ENCODE measurements at regions of chr12 and their contacts with region 1.

Region 1: DNA sequence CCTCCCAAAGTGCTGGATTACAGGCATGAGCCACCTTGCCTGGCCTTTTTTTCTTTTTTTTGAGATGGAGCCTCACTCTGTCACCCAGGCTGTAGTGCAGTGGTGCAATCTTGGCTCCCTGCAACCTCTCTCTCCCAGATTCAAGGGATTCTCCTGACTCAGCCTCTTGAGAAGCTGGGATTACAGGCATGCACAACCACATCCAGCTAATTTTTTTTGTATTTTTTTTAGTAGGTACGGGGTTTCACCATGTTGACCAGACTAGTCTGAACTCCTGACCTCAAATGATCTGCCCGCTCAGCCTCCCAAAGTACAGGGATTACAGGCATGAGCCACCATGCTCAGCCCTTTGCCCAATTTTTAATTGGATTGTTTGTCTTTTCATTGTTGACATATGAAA is 58.0 kb downstream of the SINHCAF start:
- DNase-seq: no peak
- H3K4me3 Mint-ChIP-seq: no peak overlapping the region
- H3K27ac Mint-ChIP-seq: no peak overlapping the region
- H3K4me1 Mint-ChIP-seq: peaks cover 5% of the 10 kb centered on the region
- H3K27me3 Mint-ChIP-seq: no peaks in the 10 kb centered on the region

Region 2: GRCh38 chr12:31031951-31032335 is 236.0 kb before region 1 on chr12:
- CTCF ChIA-PET with region 1: no interaction called
- POLR2A ChIA-PET with region 1: no interaction called
- intact Hi-C with region 1: no loop called
- DNase-seq: no peak
- H3K4me3 Mint-ChIP-seq: no peak overlapping the region
- H3K27ac Mint-ChIP-seq: no peak overlapping the region
- H3K4me1 Mint-ChIP-seq: no peaks in the 10 kb centered on the region
- H3K27me3 Mint-ChIP-seq: peaks cover 10% of the 10 kb centered on the region

Region 3: GRCh38 chr12:31238764-31239387 is 29.1 kb before region 1 on chr12:
- CTCF ChIA-PET with region 1: interaction called, 24 read pairs
- POLR2A ChIA-PET with region 1: no interaction called
- intact Hi-C with region 1: no loop called
- DNase-seq: peak; percentile 84
- H3K4me3 Mint-ChIP-seq: no peak overlapping the region
- H3K27ac Mint-ChIP-seq: no peak overlapping the region
- H3K4me1 Mint-ChIP-seq: peaks cover 10% of the 10 kb centered on the region
- H3K27me3 Mint-ChIP-seq: peaks cover 12% of the 10 kb centered on the region

Region 4: DNA sequence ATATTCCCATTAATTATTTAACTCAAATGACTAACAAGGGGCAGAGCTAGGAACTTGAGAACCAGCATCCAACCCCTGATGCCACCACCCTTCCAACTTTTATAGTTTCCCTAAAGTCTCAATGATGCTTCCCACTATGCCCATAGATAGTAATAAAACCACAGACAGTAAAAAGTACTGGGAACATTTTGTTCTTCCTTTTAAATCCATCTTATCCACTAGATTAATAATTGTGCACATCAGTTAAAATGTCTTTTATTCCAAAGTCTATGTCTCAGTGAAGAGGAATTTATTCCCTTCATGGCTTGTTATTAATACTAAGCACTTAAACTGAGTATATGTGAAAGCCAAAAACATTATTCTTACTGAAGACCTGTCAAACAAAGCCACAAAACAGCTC is 12.2 kb after region 1 on chr12:
- CTCF ChIA-PET with region 1: interaction called, 15 read pairs
- POLR2A ChIA-PET with region 1: no interaction called
- intact Hi-C with region 1: no loop called
- DNase-seq: no peak
- H3K4me3 Mint-ChIP-seq: no peak overlapping the region
- H3K27ac Mint-ChIP-seq: no peak overlapping the region
- H3K4me1 Mint-ChIP-seq: no peaks in the 10 kb centered on the region
- H3K27me3 Mint-ChIP-seq: no peaks in the 10 kb centered on the region

Region 5: DNA sequence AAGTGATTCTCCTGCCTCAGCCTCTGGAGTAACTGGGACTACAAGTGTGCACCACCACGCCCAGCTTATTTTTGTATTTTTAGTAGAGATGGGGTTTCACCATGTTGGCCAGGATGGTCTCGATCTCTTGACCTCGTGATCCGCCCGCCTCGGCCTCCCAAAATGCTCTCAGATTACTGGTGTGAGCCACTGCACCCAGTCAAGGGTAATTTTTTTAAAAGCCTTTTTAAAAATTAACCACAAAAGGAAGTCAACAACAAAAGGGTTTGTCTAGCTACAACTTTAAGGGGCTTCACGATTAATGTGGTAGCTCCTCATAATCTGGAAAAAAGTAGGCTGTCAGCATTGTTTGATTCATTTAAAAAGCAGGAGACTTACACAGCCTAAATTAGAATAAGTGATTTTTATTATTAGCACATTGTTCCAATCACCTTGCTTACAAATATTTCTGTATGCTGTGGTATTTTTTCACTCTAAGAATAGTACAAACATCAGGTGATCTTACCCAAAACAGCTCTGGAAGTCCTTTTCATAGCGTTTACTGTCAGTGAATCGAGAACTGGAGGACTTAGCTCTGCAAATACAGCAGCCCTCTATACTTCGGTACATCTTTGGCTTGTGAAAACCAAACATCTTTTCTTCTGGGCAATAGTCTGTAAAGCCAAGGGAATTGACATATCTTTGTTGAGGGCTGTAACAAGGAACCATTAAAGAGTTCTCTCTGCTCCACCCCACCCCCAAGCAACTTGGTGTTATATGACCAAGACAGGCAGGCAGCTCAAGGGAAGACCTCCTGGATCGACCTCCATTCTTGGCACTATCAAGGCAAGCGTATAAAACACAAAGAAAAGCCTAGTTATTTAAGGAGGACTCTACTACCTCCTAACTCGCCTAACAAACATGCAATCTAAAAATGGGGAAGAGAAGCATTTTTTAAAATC is 29.9 kb after region 1 on chr12:
- CTCF ChIA-PET with region 1: interaction called, 21 read pairs
- POLR2A ChIA-PET with region 1: no interaction called
- intact Hi-C with region 1: no loop called
- DNase-seq: no peak
- H3K4me3 Mint-ChIP-seq: no peak overlapping the region
- H3K27ac Mint-ChIP-seq: peak overlapping the region; percentile 32
- H3K4me1 Mint-ChIP-seq: peaks cover 26% of the 10 kb centered on the region
- H3K27me3 Mint-ChIP-seq: no peaks in the 10 kb centered on the region

Region 6: GRCh38 chr12:31317471-31318395 is 49.8 kb after region 1 on chr12:
- CTCF ChIA-PET with region 1: interaction called, 17 read pairs
- POLR2A ChIA-PET with region 1: interaction called, 3 read pairs
- intact Hi-C with region 1: no loop called
- DNase-seq: no peak
- H3K4me3 Mint-ChIP-seq: peak overlapping the region; percentile 79
- H3K27ac Mint-ChIP-seq: peak overlapping the region; percentile 99
- H3K4me1 Mint-ChIP-seq: peaks cover 75% of the 10 kb centered on the region
- H3K27me3 Mint-ChIP-seq: no peaks in the 10 kb centered on the region